ENCODE measurements at regions of chr11 and their contacts with region 1.

Region 1: DNA sequence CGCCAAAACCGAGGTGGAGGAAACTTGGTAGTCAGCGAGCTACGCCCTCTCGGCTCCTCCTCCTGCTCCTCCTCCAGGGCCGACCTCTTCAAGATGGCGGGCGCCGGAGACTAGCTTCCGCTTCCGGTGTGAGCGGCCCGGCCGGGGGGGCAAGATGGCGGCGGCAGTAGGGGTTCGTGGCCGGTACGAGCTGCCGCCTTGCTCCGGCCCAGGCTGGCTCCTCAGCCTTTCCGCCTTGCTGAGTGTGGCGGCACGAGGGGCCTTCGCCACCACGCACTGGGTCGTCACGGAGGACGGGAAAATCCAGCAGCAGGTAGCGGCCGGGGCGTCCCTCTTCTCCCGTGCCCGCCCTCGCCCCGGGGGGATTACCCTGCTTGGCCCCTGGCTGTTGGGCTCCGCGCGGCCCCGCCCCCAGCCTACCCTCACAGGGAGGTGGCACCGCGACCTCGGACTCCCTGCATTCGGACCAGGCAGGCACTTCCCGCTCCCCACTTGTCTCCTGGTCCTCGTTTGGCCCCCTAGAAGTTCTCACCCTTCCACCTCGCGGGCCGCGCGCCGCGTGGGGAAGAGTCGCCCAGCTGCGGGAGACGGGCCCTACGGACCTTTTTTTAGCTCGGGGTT is at the start of gene TTC17:
- DNase-seq: peak; percentile 93
- ATAC-seq: peak; percentile 93
- H3K4me3 ChIP-seq: peak within 1 kb of the TSS; percentile 75 to 96 (median 91)
- H3K4me3 Mint-ChIP-seq: peak within 1 kb of the TSS; percentile 91
- H3K27ac ChIP-seq: peak within 1 kb of the TSS; percentile 89 to 96
- H3K27ac Mint-ChIP-seq: peak within 1 kb of the TSS; percentile 97
- H3K4me1 ChIP-seq: peaks cover 22 to 25% of the 10 kb centered on the region in 2 donors
- H3K4me1 Mint-ChIP-seq: peaks cover 51% of the 10 kb centered on the region
- H3K27me3 ChIP-seq: no peaks in the 10 kb centered on the region
- H3K27me3 Mint-ChIP-seq: no peaks in the 10 kb centered on the region
- CTCF ChIP-seq: no peak
- total RNA-seq, gene TTC17: 176 and 182 TPM in 2 replicates

Region 2: GRCh38 chr11:43289368-43289767 is 69.5 kb before region 1 on chr11:
- CTCF ChIA-PET with region 1: no interaction called
- POLR2A ChIA-PET with region 1: no interaction called
- intact Hi-C with region 1: no loop called
- DNase-seq: no peak
- ATAC-seq: no peak
- H3K4me3 ChIP-seq: no peak overlapping the region
- H3K4me3 Mint-ChIP-seq: no peak overlapping the region
- H3K27ac ChIP-seq: no peak overlapping the region
- H3K27ac Mint-ChIP-seq: no peak overlapping the region
- H3K4me1 ChIP-seq: no peaks in the 10 kb centered on the region
- H3K4me1 Mint-ChIP-seq: no peaks in the 10 kb centered on the region
- H3K27me3 ChIP-seq: peaks cover 0 to 6% (median 4%) of the 10 kb centered on the region in 4 experiments
- H3K27me3 Mint-ChIP-seq: peaks cover 10% of the 10 kb centered on the region
- CTCF ChIP-seq: no peak

Region 3: GRCh38 chr11:43311791-43312607 is 46.9 kb before region 1 on chr11 and contains the start of gene API5:
- CTCF ChIA-PET with region 1: interaction called, 44 read pairs
- POLR2A ChIA-PET with region 1: interaction called, 8 read pairs
- intact Hi-C with region 1: loop called (anchors 1 kb)
- DNase-seq: peak; percentile 96
- ATAC-seq: peak; percentile 97
- H3K4me3 ChIP-seq: peak within 1 kb of the TSS; percentile 86 to 97 (median 95)
- H3K4me3 Mint-ChIP-seq: peak within 1 kb of the TSS; percentile 96
- H3K27ac ChIP-seq: peak within 1 kb of the TSS; percentile 67 to 84
- H3K27ac Mint-ChIP-seq: peak within 1 kb of the TSS; percentile 97
- H3K4me1 ChIP-seq: peaks cover 18 to 20% of the 10 kb centered on the region in 2 donors
- H3K4me1 Mint-ChIP-seq: peaks cover 45% of the 10 kb centered on the region
- H3K27me3 ChIP-seq: no peaks in the 10 kb centered on the region
- H3K27me3 Mint-ChIP-seq: no peaks in the 10 kb centered on the region
- CTCF ChIP-seq: peak; percentile 83
- total RNA-seq, gene API5: 88.3 and 94.7 TPM in 2 replicates

Region 4: DNA sequence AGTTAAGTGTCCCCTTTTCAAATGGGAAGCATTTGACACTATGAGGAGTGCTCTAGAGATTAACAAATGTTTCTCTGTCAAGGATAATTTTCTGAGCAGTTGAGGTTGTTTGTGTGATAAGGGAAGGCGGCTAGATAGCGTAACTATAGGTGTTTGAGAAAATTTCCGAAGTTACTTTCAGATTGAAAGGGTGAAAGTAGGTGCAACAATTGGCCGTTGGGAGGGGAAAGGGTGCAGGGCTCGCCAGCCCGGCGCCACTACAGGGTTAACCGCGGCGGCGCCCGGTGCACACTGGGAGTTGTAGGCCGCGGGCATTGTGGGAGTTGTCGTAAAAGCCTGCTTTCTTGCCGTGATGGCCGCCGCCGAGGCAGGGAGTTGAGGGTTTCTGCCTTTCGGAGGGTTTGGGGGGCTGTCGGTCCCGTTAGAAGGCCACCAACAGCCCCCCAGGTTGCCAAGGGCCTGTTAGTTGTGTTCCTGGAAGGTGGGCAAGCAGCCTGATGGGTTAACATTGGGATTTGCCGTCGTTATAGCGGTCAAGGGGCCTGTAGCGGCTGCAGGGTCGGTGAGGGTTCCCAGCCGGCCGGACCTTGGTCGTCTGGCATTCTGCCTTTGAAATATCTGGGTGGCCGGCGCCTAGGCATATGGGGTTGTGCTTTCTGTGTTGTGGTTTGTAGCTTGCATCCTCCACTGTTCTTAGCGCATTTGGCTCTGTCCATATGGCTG is 285.1 kb after region 1 on chr11:
- CTCF ChIA-PET with region 1: no interaction called
- POLR2A ChIA-PET with region 1: no interaction called
- intact Hi-C with region 1: loop called (anchors 5 kb)
- DNase-seq: peak; percentile 87
- ATAC-seq: peak; percentile 99
- H3K4me3 ChIP-seq: peak overlapping the region; percentile 67 to 94 (median 84)
- H3K4me3 Mint-ChIP-seq: peak overlapping the region; percentile 89
- H3K27ac ChIP-seq: peak overlapping the region; percentile 32 to 74
- H3K27ac Mint-ChIP-seq: peak overlapping the region; percentile 78
- H3K4me1 ChIP-seq: peaks cover 7 to 10% of the 10 kb centered on the region in 2 donors
- H3K4me1 Mint-ChIP-seq: peaks cover 22% of the 10 kb centered on the region
- H3K27me3 ChIP-seq: peaks cover 0 to 17% (median 8%) of the 10 kb centered on the region in 4 experiments
- H3K27me3 Mint-ChIP-seq: peaks cover 16% of the 10 kb centered on the region
- CTCF ChIP-seq: no peak

Region 5: GRCh38 chr11:43880640-43881159 is 521.8 kb after region 1 on chr11 and contains the start of gene ALKBH3:
- CTCF ChIA-PET with region 1: interaction called, 3 read pairs
- POLR2A ChIA-PET with region 1: no interaction called
- intact Hi-C with region 1: loop called (anchors 1 kb)
- DNase-seq: peak; percentile 93
- ATAC-seq: peak; percentile 99
- H3K4me3 ChIP-seq: peak within 1 kb of the TSS; percentile 54 to 96 (median 82)
- H3K4me3 Mint-ChIP-seq: peak within 1 kb of the TSS; percentile 95
- H3K27ac ChIP-seq: peak within 1 kb of the TSS; percentile 3 to 62
- H3K27ac Mint-ChIP-seq: peak within 1 kb of the TSS; percentile 82
- H3K4me1 ChIP-seq: peaks cover 14 to 15% of the 10 kb centered on the region in 2 donors
- H3K4me1 Mint-ChIP-seq: peaks cover 19% of the 10 kb centered on the region
- H3K27me3 ChIP-seq: peaks cover 0 to 26% (median 8%) of the 10 kb centered on the region in 4 experiments
- H3K27me3 Mint-ChIP-seq: peaks cover 26% of the 10 kb centered on the region
- CTCF ChIP-seq: no peak
- total RNA-seq, gene ALKBH3: 26.7 and 27.3 TPM in 2 replicates

Region 6: GRCh38 chr11:44065841-44066731 is 707.2 kb after region 1 on chr11 and contains the start of gene ACCS:
- CTCF ChIA-PET with region 1: no interaction called
- POLR2A ChIA-PET with region 1: no interaction called
- intact Hi-C with region 1: loop called (anchors 2 kb)
- DNase-seq: peak; percentile 94
- ATAC-seq: peak; percentile 96
- H3K4me3 ChIP-seq: peak within 1 kb of the TSS; percentile 32 to 85 (median 81)
- H3K4me3 Mint-ChIP-seq: peak within 1 kb of the TSS; percentile 97
- H3K27ac ChIP-seq: peak within 1 kb of the TSS; percentile 71 to 77
- H3K27ac Mint-ChIP-seq: peak within 1 kb of the TSS; percentile 91
- H3K4me1 ChIP-seq: peaks cover 6 to 18% of the 10 kb centered on the region in 2 donors
- H3K4me1 Mint-ChIP-seq: peaks cover 22% of the 10 kb centered on the region
- H3K27me3 ChIP-seq: no peaks in the 10 kb centered on the region
- H3K27me3 Mint-ChIP-seq: no peaks in the 10 kb centered on the region
- CTCF ChIP-seq: peak; percentile 87
- total RNA-seq, gene ACCS: 56.2 and 59.5 TPM in 2 replicates

Region 7: GRCh38 chr11:45102810-45103621 is 1744.1 kb after region 1 on chr11:
- CTCF ChIA-PET with region 1: no interaction called
- POLR2A ChIA-PET with region 1: no interaction called
- intact Hi-C with region 1: no loop called
- DNase-seq: peak; percentile 82
- ATAC-seq: peak; percentile 95
- H3K4me3 ChIP-seq: peak overlapping the region in 1 of 5 experiments; percentile 18
- H3K4me3 Mint-ChIP-seq: peak overlapping the region; percentile 83
- H3K27ac ChIP-seq: no peak overlapping the region
- H3K27ac Mint-ChIP-seq: peak overlapping the region; percentile 80
- H3K4me1 ChIP-seq: peaks cover 13 to 21% of the 10 kb centered on the region in 2 donors
- H3K4me1 Mint-ChIP-seq: peaks cover 17% of the 10 kb centered on the region
- H3K27me3 ChIP-seq: peaks cover 0 to 8% (median 3%) of the 10 kb centered on the region in 4 experiments
- H3K27me3 Mint-ChIP-seq: peaks cover 13% of the 10 kb centered on the region
- CTCF ChIP-seq: peak; percentile 98

Region 8: GRCh38 chr11:45354976-45355705 is 1996.2 kb after region 1 on chr11:
- CTCF ChIA-PET with region 1: no interaction called
- POLR2A ChIA-PET with region 1: no interaction called
- intact Hi-C with region 1: loop called (anchors 5 kb)
- DNase-seq: peak; percentile 94
- ATAC-seq: peak; percentile 96
- H3K4me3 ChIP-seq: peak overlapping the region; percentile 22 to 68 (median 63)
- H3K4me3 Mint-ChIP-seq: peak overlapping the region; percentile 83
- H3K27ac ChIP-seq: peak overlapping the region; percentile 43 to 64
- H3K27ac Mint-ChIP-seq: peak overlapping the region; percentile 90
- H3K4me1 ChIP-seq: peaks cover 13 to 17% of the 10 kb centered on the region in 2 donors
- H3K4me1 Mint-ChIP-seq: peaks cover 15% of the 10 kb centered on the region
- H3K27me3 ChIP-seq: peaks cover 0 to 6% (median 0%) of the 10 kb centered on the region in 4 experiments
- H3K27me3 Mint-ChIP-seq: peaks cover 30% of the 10 kb centered on the region
- CTCF ChIP-seq: no peak

Measured in B cell (primary cell).